ENCODE measurements at regions of chr1 and their contacts with region 1.

Region 1: GRCh38 chr1:156282479-156283222 is at the start of gene SMG5:
- DNase-seq: peak; percentile 94
- H3K4me3 Mint-ChIP-seq: peak within 1 kb of the TSS; percentile 91
- H3K27ac Mint-ChIP-seq: peak within 1 kb of the TSS; percentile 93
- H3K4me1 Mint-ChIP-seq: peaks cover 44% of the 10 kb centered on the region
- H3K27me3 Mint-ChIP-seq: peaks cover 1% of the 10 kb centered on the region
- total RNA-seq, gene SMG5: 95.6 TPM in 2 replicates

Region 2: DNA sequence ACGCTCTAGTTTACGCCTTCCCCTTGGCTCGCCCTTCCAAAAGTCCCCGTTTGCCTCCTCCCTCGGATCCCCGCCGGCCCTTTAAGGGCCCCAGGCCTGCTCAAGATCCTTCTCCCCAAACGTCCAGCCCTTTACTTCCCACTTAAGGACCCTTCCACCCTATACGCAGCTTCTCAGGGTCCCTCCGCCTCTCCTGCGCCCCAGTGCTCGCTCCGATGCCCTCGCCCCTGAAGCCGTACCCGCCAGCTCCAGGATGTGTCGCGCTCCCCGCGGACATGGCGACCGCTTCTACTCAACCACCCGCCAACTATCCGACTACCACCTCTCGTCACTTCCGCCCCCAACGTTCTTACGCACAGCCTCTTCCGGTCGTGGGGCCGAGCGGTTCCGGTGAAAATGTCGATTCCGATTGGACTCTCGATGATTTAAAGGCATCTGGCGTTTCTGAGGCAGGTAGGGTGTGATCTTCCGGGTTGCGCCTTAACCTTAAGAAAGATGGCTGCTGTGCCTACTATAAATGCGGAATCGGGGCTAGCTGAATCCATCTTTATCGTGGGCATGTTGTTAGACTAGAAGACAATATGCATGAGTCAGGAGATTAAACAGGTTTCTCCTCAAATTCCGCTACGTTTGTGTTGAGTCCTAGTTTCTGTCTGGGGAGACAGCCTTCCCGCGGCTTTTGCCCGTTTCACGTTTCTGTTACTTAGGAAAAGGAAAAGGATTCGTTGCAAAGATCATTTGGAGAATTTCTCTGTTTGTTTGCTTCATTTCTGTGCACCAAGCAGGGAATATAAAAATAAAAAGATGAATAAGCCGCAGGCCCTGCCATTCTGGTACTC is 348.3 kb before region 1 on chr1 and contains the start of gene KHDC4:
- intact Hi-C with region 1: loop called (anchors 1 kb)
- DNase-seq: peak; percentile 94
- H3K4me3 Mint-ChIP-seq: no peak within 1 kb of the TSS
- H3K27ac Mint-ChIP-seq: peak within 1 kb of the TSS; percentile 61
- H3K4me1 Mint-ChIP-seq: peaks cover 39% of the 10 kb centered on the region
- H3K27me3 Mint-ChIP-seq: no peaks in the 10 kb centered on the region
- total RNA-seq, gene KHDC4: 80.1 and 81.8 TPM in 2 replicates

Region 3: GRCh38 chr1:156193488-156194299 is 89.0 kb before region 1 on chr1 and contains the start of gene SLC25A44:
- intact Hi-C with region 1: loop called (anchors 1 kb)
- DNase-seq: peak; percentile 97
- H3K4me3 Mint-ChIP-seq: peak within 1 kb of the TSS; percentile 94
- H3K27ac Mint-ChIP-seq: peak within 1 kb of the TSS; percentile 87
- H3K4me1 Mint-ChIP-seq: peaks cover 54% of the 10 kb centered on the region
- H3K27me3 Mint-ChIP-seq: no peaks in the 10 kb centered on the region
- total RNA-seq, gene SLC25A44: 67.6 and 79.3 TPM in 2 replicates

Region 4: DNA sequence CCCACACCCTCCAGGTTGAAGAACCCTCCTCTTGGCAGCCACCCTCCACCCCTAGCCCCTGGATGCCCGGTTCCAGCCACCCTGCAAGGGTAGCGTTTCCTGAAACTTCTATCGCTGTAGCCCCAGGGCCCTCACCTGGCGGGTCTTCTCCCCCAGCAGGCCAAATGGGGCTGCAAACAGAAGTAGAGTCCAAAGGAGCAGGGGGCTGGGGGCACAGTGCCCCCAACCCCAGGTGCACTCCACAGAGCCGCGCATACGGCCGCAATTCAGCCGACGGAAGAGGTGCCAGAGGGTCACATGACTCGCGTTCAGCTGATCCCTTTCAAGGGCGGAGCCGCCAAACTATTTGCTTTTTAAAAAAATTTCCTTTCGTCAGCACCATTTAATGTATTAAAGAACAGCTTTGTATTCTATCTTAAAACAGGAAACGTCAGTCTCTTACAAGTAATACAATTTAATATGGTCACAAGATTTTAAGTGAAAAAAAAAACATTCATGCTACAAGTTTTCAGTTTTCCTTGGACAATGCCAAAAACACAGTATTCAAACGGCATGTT is 12.8 kb after region 1 on chr1 and contains the start of gene GLMP:
- intact Hi-C with region 1: loop called (anchors 1 kb)
- DNase-seq: peak; percentile 48
- H3K4me3 Mint-ChIP-seq: peak within 1 kb of the TSS; percentile 90
- H3K27ac Mint-ChIP-seq: peak within 1 kb of the TSS; percentile 86
- H3K4me1 Mint-ChIP-seq: peaks cover 15% of the 10 kb centered on the region
- H3K27me3 Mint-ChIP-seq: no peaks in the 10 kb centered on the region
- total RNA-seq, gene GLMP: 17.2 and 20.3 TPM in 2 replicates

Region 5: GRCh38 chr1:156571949-156572662 is 289.5 kb after region 1 on chr1 and contains the start of gene IQGAP3:
- intact Hi-C with region 1: loop called (anchors 5 kb)
- DNase-seq: peak; percentile 74
- H3K4me3 Mint-ChIP-seq: peak within 1 kb of the TSS; percentile 96
- H3K27ac Mint-ChIP-seq: peak within 1 kb of the TSS; percentile 76
- H3K4me1 Mint-ChIP-seq: peaks cover 28% of the 10 kb centered on the region
- H3K27me3 Mint-ChIP-seq: peaks cover 18% of the 10 kb centered on the region
- total RNA-seq, gene IQGAP3: 10.3 and 11.2 TPM in 2 replicates